Aorta (tissue), 5 donors: ENCODE measurements at regions of chrX and their contacts with region 1.

Region 1: GRCh38 chrX:47030339-47030738 is 47.9 kb upstream of the RGN start:
- DNase-seq: no peak
- ATAC-seq: no peak
- H3K4me3 ChIP-seq: no peak overlapping the region
- H3K27ac ChIP-seq: no peak overlapping the region
- H3K4me1 ChIP-seq: no peaks in the 10 kb centered on the region
- H3K27me3 ChIP-seq: no peaks in the 10 kb centered on the region

Region 2: DNA sequence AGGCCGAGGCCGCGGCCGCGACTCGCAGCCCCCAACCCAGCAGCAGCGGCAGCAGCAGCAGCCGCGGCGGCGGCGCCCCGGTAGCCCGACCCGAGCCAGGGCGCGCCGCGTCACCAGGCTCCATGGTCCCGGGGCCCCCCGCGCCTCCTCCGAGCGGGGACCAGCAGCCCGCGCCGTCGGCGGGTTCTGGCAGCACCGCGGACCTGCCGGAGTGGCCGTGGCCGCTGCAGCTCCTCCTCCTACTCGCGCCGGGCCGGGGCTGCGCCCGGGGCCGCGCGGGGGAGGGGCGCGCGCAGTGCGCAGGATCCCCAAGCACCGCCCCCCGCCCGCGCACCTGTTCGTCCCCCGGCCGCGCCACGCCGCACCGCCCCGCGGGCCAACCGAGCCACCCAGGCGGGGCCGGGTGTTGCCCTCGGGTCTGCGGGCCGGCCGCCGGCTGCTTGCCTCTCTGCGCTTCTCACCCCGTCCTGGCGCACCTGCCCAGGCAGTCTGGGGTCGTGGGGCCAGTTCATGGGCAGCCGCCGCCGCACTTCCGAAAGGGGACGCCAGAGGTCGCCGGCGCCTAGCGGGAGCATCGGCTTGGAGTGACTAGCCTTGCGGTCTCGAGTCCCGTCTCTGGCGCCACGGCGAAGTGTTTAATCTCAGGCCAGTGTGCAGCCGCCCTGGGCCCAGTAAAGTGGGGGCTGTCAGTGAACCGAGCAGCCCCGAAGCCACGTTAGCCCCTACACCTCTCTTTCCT is 271.3 kb before region 1 on chrX and contains the start of gene SLC9A7:
- intact Hi-C with region 1: loop called (anchors 5 to 10 kb)
- DNase-seq: peak; percentile 83 to 92
- ATAC-seq: peak; percentile 83
- H3K4me3 ChIP-seq: peak within 1 kb of the TSS; percentile 28 to 46
- H3K27ac ChIP-seq: no peak within 1 kb of the TSS
- H3K4me1 ChIP-seq: no peaks in the 10 kb centered on the region
- H3K27me3 ChIP-seq: no peaks in the 10 kb centered on the region
- total RNA-seq, gene SLC9A7: 2.5 to 3.0 TPM

Region 3: GRCh38 chrX:46903458-46904242 is 126.7 kb before region 1 on chrX:
- intact Hi-C with region 1: loop called (anchors 5 kb)
- DNase-seq: peak; percentile 82 to 91
- ATAC-seq: peak; percentile 89
- H3K4me3 ChIP-seq: no peak overlapping the region
- H3K27ac ChIP-seq: no peak overlapping the region
- H3K4me1 ChIP-seq: no peaks in the 10 kb centered on the region
- H3K27me3 ChIP-seq: no peaks in the 10 kb centered on the region